ENCODE measurements at regions of chr3 and their contacts with region 1.

Region 1: GRCh38 chr3:42780892-42781700 is 8.0 kb upstream of the CCDC13 start:
- DNase-seq: no peak
- H3K4me3 ChIP-seq: no peak overlapping the region
- H3K27ac ChIP-seq: no peak overlapping the region
- H3K27me3 ChIP-seq: no peaks in the 10 kb centered on the region
- CTCF ChIP-seq: peak; percentile 72

Region 2: DNA sequence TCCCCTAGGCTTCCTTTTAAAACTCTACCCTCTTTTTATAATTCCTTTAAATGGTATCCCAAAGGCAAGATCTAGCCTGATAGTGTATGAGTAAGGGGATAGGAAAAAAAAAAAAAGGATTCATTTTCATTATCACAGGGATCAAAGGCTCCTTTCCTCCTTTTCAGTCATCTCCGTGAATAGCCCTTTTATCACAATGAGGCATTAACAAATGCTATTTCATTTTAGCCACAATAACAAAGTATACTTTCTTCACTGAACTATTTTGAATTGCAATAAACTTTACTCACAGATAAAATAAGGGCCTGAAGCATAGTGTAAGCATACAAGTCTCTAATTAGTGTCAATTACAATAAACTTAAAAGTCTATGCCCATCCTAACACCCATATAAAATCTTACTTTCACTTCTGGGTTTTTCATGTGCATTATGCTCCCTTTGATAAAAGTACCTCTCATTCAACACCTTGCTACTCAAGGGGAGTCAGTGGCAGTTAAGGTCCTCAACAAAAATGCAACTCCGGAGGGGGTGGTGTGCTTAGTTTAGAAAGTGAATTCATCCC is 14.6 kb after region 1 on chr3:
- CTCF ChIA-PET with region 1: interaction called, 28 read pairs
- POLR2A ChIA-PET with region 1: interaction called, 3 read pairs
- DNase-seq: no peak
- H3K4me3 ChIP-seq: no peak overlapping the region
- H3K27ac ChIP-seq: no peak overlapping the region
- H3K27me3 ChIP-seq: no peaks in the 10 kb centered on the region
- CTCF ChIP-seq: no peak

Region 3: GRCh38 chr3:42804106-42804830 is 23.2 kb after region 1 on chr3 and contains the start of gene HIGD1A:
- CTCF ChIA-PET with region 1: interaction called, 15 read pairs
- POLR2A ChIA-PET with region 1: interaction called, 6 read pairs
- DNase-seq: peak; percentile 81
- H3K4me3 ChIP-seq: peak within 1 kb of the TSS; percentile 85
- H3K27ac ChIP-seq: peak within 1 kb of the TSS; percentile 85
- H3K27me3 ChIP-seq: peaks cover 4% of the 10 kb centered on the region
- CTCF ChIP-seq: no peak
- polyA plus RNA-seq, gene HIGD1A: 158 and 225 TPM in 2 replicates

Region 4: DNA sequence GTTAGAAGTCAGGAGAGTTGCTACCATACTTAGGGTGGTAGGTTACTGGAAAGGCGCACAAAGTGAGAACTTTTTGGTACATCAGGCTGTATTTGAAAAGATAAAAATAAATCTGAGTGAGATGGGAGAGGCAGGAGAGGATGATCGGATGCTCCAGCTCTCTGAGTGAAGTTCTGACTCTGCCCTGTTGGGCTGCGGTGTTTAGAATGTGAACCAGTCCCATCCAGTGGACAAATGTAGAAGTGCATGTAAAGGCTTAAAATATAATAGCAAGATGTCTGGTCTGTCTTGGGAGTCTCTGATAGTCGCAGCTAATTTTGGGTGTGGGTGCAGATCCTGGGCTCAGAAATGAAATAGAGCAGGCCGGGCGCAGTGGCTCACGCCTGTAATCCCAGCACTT is 58.5 kb after region 1 on chr3:
- CTCF ChIA-PET with region 1: interaction called, 37 read pairs
- POLR2A ChIA-PET with region 1: interaction called, 3 read pairs
- DNase-seq: peak; percentile 42
- H3K4me3 ChIP-seq: peak overlapping the region; percentile 36
- H3K27ac ChIP-seq: no peak overlapping the region
- H3K27me3 ChIP-seq: peaks cover 16% of the 10 kb centered on the region
- CTCF ChIP-seq: peak; percentile 85

Region 5: GRCh38 chr3:42880601-42881451 is 99.7 kb after region 1 on chr3:
- CTCF ChIA-PET with region 1: interaction called, 15 read pairs
- POLR2A ChIA-PET with region 1: no interaction called
- DNase-seq: peak; percentile 23
- H3K4me3 ChIP-seq: peak overlapping the region; percentile 65
- H3K27ac ChIP-seq: no peak overlapping the region
- H3K27me3 ChIP-seq: peaks cover 7% of the 10 kb centered on the region
- CTCF ChIP-seq: peak; percentile 83

Region 6: DNA sequence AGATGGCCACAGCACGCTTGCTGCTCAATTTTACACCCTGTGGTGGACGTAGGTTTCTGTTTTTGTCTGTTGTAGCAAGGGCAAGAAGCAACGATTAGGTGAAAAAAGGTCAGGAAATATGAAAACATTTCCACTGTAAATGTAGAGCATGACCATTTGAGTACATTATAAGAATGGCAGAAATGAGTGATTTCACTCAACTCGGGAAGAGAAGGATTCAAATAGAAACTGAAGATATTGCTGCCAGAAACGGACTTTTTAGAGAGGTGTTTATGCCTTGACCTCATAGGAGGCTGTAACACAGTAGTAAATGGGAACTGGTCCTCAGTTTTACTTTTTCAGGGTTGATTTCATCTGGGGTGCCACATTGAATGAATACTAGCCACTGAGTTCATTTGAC is 165.0 kb after region 1 on chr3:
- CTCF ChIA-PET with region 1: no interaction called
- POLR2A ChIA-PET with region 1: no interaction called
- DNase-seq: no peak
- H3K4me3 ChIP-seq: no peak overlapping the region
- H3K27ac ChIP-seq: no peak overlapping the region
- H3K27me3 ChIP-seq: no peaks in the 10 kb centered on the region
- CTCF ChIP-seq: no peak